ENCODE measurements at regions of chr1 and their contacts with region 1.

Region 1: DNA sequence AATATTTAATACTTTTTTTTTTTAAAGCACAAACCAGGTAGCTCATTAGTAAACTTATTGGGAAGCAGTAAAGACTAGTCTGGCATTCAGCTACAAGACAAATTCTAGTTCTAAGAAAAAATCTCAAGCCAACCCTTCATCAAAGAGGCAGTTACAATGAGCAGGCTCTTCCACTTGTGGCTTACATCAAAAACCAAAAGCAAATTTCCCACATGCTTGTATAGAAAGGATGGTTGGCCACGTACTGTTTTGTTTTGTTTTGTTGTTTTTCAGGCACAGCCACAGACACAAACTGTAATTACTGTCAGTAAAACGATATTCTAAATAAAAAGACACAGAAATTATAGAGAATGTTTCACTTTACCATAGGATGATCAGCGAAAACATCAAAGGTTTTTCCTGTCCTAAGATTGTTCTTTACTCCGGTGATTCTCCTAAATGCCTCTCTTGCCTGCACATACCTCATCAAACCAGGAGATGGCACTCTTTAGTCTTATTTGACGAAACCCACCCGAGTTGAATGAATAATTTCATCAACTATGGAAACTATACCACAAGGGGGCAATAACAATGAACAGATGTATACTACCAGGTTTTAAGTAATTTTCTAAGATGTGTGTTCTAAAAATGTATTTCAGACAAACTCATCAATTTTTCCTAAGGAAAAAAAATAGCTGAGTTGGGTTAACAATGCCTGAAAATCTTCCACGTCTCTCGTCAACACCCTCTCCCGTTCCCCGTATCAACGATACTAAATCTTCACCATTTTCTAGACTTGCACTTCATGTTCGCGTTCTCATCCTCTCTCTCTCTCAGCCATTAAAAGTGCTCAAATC is 26.9 kb downstream of the RPL5 start:
- DNase-seq: peak; percentile 58
- ATAC-seq: peak; percentile 86
- H3K4me3 Mint-ChIP-seq: peak overlapping the region; percentile 48
- H3K27ac Mint-ChIP-seq: peak overlapping the region; percentile 48
- H3K4me1 Mint-ChIP-seq: peaks cover 17% of the 10 kb centered on the region
- H3K27me3 Mint-ChIP-seq: no peaks in the 10 kb centered on the region

Region 2: GRCh38 chr1:92872719-92873118 is 13.9 kb after region 1 on chr1:
- CTCF ChIA-PET with region 1: interaction called, 24 read pairs
- POLR2A ChIA-PET with region 1: no interaction called
- intact Hi-C with region 1: no loop called
- DNase-seq: no peak
- ATAC-seq: no peak
- H3K4me3 Mint-ChIP-seq: no peak overlapping the region
- H3K27ac Mint-ChIP-seq: no peak overlapping the region
- H3K4me1 Mint-ChIP-seq: peaks cover 20% of the 10 kb centered on the region
- H3K27me3 Mint-ChIP-seq: no peaks in the 10 kb centered on the region

Region 3: GRCh38 chr1:92882819-92883218 is 24.0 kb after region 1 on chr1:
- CTCF ChIA-PET with region 1: interaction called, 27 read pairs
- POLR2A ChIA-PET with region 1: no interaction called
- intact Hi-C with region 1: no loop called
- DNase-seq: peak; percentile 41
- ATAC-seq: peak; percentile 86
- H3K4me3 Mint-ChIP-seq: no peak overlapping the region
- H3K27ac Mint-ChIP-seq: peak overlapping the region; percentile 62
- H3K4me1 Mint-ChIP-seq: peaks cover 40% of the 10 kb centered on the region
- H3K27me3 Mint-ChIP-seq: no peaks in the 10 kb centered on the region

Region 4: GRCh38 chr1:92968138-92969032 is 109.6 kb after region 1 on chr1:
- CTCF ChIA-PET with region 1: interaction called, 156 read pairs
- POLR2A ChIA-PET with region 1: no interaction called
- intact Hi-C with region 1: loop called in 1 of 2 experiments (anchors 2 kb)
- DNase-seq: peak; percentile 32
- ATAC-seq: peak; percentile 70
- H3K4me3 Mint-ChIP-seq: no peak overlapping the region
- H3K27ac Mint-ChIP-seq: no peak overlapping the region
- H3K4me1 Mint-ChIP-seq: peaks cover 31% of the 10 kb centered on the region
- H3K27me3 Mint-ChIP-seq: no peaks in the 10 kb centered on the region

Region 5: DNA sequence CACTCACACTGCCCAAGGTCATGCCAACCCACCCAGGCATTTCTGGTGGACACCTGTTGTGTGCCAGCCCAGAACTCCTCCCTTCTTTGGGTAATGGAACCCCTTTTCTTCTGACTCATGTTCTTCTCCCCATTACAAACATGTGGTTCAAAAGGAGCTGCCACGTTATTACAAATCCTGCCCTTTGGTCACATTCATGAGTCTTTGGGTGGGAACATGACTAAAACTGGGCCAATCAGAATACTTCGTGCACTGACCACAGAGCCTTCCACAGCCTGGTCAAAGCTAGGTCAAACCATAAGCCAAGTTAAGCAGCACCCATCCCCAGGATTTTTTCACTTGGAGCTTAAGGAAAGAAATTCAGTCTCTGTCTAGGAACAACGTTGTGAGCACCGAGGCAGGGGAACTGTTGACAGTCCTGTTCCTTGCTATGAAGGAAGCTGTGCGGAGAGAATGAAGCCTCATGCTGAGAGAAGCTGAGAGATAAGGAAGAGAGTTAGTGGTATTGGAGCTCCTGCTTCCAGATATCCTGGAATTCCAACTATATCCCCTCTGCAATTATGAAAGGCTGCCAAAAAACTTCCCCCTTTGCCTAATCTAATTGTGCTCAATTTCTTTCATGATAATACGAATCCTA is 149.3 kb after region 1 on chr1:
- CTCF ChIA-PET with region 1: interaction called, 10 read pairs
- POLR2A ChIA-PET with region 1: interaction called, 6 read pairs
- intact Hi-C with region 1: no loop called
- DNase-seq: no peak
- ATAC-seq: no peak
- H3K4me3 Mint-ChIP-seq: no peak overlapping the region
- H3K27ac Mint-ChIP-seq: no peak overlapping the region
- H3K4me1 Mint-ChIP-seq: peaks cover 10% of the 10 kb centered on the region
- H3K27me3 Mint-ChIP-seq: peaks cover 9% of the 10 kb centered on the region

Measured in activated CD4-positive, alpha-beta T cell treated with anti-CD3 and anti-CD28 coated beads for 36 hours (primary cell).